HepG2 (cell line): ENCODE measurements at regions of chr3 and their contacts with region 1.

Region 1: GRCh38 chr3:38164966-38165680 is at the start of gene OXSR1:
- DNase-seq: peak; percentile 99
- ATAC-seq: peak; percentile 93
- H3K4me3 ChIP-seq: peak within 1 kb of the TSS; percentile 86 to 97 (median 90)
- H3K27ac ChIP-seq: peak within 1 kb of the TSS; percentile 96
- H3K4me1 ChIP-seq: peaks cover 48% of the 10 kb centered on the region
- H3K27me3 ChIP-seq: no peaks in the 10 kb centered on the region; a peak in 1 of 5 replicates
- CTCF ChIP-seq: 0 out of 2 replicates have a peak, but pooled peaks have one; percentile 0
- EP300 ChIP-seq: no peak; a peak in 1 of 4 replicates
- POLR2A ChIP-seq: peak; percentile 82 to 89
- RAD21 ChIP-seq: 0 out of 2 replicates have a peak, but pooled peaks have one; percentile 8
- total RNA-seq, gene OXSR1: 32.6 and 41.1 TPM in 2 replicates

Region 2: GRCh38 chr3:38131621-38132369 is 33.3 kb before region 1 on chr3:
- CTCF ChIA-PET with region 1: no interaction called
- POLR2A ChIA-PET with region 1: interaction called, 179 read pairs
- in situ Hi-C with region 1: no loop called
- intact Hi-C with region 1: no loop called
- DNase-seq: no peak
- ATAC-seq: peak; percentile 6; the same call in 2 of the 3 replicates
- H3K4me3 ChIP-seq: peak overlapping the region in 1 of 3 experiments; percentile 61; a peak in 2 of 6 replicates
- H3K27ac ChIP-seq: peak overlapping the region; percentile 97
- H3K4me1 ChIP-seq: peaks cover 86% of the 10 kb centered on the region
- H3K27me3 ChIP-seq: no peaks in the 10 kb centered on the region; a peak in 1 of 5 replicates
- CTCF ChIP-seq: peak; percentile 62
- EP300 ChIP-seq: no peak
- POLR2A ChIP-seq: no peak
- RAD21 ChIP-seq: peak; percentile 59; the same call in 1 of the 2 replicates